ENCODE measurements at regions of chr14 and their contacts with region 1.

Region 1: GRCh38 chr14:32524609-32525375 is 195.7 kb downstream of the AKAP6 start:
- DNase-seq: no peak
- H3K4me3 ChIP-seq: no peak overlapping the region
- H3K27ac ChIP-seq: no peak overlapping the region
- H3K27me3 ChIP-seq: no peaks in the 10 kb centered on the region
- CTCF ChIP-seq: no peak

Region 2: DNA sequence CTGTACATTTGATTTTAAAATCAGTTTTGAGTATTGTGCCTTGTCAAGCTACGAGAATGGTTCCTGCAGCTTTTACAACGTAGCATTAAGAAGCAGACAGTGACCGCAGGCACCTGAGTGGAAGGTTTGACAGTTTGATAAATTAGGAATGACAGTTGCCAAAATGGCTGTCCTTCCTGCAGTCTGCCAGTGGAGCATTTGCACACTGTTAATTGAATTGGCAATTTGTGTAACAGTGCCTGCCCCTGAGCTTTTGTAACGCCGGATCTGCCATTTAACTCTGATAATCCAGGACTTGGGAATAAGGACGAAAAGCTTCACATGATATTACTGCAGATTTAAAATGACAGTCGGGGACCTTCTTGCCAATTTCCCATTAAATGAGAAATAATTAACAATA is 799.2 kb after region 1 on chr14:
- CTCF ChIA-PET with region 1: interaction called, 10 read pairs
- POLR2A ChIA-PET with region 1: no interaction called
- DNase-seq: no peak
- H3K4me3 ChIP-seq: no peak overlapping the region
- H3K27ac ChIP-seq: no peak overlapping the region
- H3K27me3 ChIP-seq: no peaks in the 10 kb centered on the region
- CTCF ChIP-seq: no peak

Measured in AG04450 (cell line).